ENCODE measurements at regions of chr7 and their contacts with region 1.

Region 1: GRCh38 chr7:322111-322671 is 32.2 kb downstream of the FOXL3 start:
- DNase-seq: peak; percentile 100
- H3K4me3 ChIP-seq: peak overlapping the region in 1 of 2 experiments; percentile 35; a peak in 1 of 4 replicates
- H3K27ac ChIP-seq: no peak overlapping the region
- H3K4me1 ChIP-seq: peaks cover 0 to 22% of the 10 kb centered on the region in 2 experiments; a peak in 1 of 4 replicates
- H3K27me3 ChIP-seq: peaks cover 39% of the 10 kb centered on the region
- CTCF ChIP-seq: peak; percentile 90
- EP300 ChIP-seq: no peak
- RAD21 ChIP-seq: peak; percentile 89

Region 2: DNA sequence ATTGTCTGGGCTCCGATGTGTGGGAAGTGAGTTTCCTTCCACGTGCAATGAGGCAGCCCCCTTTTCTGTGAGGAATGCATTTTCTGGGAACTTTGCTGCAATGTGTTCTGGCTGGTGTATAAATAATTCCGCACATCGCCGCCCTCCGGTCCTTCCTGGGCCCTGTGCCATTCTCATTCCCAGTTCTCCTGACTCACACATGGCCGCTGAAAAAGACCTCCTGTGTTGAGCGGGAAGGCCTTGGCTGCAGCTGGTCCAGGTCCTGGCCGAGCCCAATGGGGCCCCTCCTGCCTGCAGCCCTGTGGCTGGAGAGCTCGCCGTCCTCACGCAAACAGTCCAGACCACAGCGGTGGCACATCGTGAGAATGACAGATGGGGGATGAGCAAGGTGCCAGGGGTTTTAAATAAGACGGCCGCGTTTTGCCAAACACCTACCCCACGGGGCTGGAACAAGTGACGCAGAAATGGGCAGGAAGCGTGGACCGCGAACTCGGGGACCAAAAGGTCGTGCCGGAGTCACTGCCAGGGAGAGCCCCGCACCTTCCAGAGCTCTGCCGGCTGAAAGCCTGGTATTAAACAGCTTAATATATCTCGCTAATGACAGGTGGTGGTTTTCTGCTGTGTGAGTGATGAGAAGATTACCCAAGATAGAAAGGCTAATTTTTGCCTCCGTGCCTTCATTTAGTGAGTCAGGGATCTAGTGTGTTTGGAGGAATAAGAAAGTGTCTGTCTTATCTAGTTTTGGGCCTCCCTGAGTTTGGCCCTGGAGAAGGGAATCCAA is 92.8 kb before region 1 on chr7:
- CTCF ChIA-PET with region 1: no interaction called
- POLR2A ChIA-PET with region 1: no interaction called
- DNase-seq: no peak
- H3K4me3 ChIP-seq: no peak overlapping the region
- H3K27ac ChIP-seq: no peak overlapping the region
- H3K4me1 ChIP-seq: no peaks in the 10 kb centered on the region; a peak in 1 of 4 replicates
- H3K27me3 ChIP-seq: no peaks in the 10 kb centered on the region
- CTCF ChIP-seq: no peak
- EP300 ChIP-seq: no peak
- RAD21 ChIP-seq: no peak

Region 3: GRCh38 chr7:305410-306151 is 16.6 kb before region 1 on chr7:
- CTCF ChIA-PET with region 1: interaction called, 19 read pairs
- POLR2A ChIA-PET with region 1: no interaction called
- DNase-seq: peak; percentile 44
- H3K4me3 ChIP-seq: no peak overlapping the region
- H3K27ac ChIP-seq: no peak overlapping the region
- H3K4me1 ChIP-seq: no peaks in the 10 kb centered on the region
- H3K27me3 ChIP-seq: peaks cover 18% of the 10 kb centered on the region
- CTCF ChIP-seq: no peak
- EP300 ChIP-seq: no peak
- RAD21 ChIP-seq: no peak

Region 4: DNA sequence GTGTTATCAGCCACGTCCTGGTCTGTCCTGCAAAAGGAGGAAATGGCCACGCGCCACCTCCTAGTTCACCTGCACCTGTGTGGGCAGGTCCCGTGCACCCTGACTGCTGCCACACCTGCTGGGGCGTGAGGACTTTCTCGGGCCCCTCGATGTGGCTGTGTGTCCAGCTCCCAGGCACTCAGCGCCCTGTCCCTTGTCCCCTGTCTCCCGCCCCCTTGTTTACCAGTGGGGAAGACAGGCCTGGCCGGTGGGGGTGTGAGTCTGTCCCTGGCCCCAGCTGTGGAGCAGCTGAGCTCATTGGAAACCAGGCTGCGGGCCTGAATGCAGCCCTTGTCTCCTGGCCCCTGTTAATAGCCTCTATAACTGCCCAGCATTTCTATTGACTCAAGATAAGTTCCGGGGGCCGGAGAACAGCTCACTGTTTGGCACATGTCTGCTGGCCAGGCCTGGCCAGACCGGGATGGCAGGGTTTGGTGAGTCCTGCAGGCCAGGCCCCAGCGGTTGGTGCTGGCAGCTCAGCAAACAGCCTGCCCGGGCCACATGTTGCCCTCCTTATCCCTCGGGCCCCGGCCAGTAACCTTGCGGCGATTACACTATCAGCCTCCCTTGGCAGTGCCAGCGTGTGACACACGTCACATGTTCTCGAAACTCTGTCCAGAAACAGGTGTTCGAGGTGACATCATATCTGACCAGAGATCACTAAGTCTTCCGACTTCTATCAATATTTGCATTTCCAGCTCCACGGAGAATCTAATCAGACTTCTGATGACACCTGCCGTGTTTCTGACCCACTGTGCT is 19.8 kb after region 1 on chr7:
- CTCF ChIA-PET with region 1: interaction called, 18 read pairs
- POLR2A ChIA-PET with region 1: no interaction called
- DNase-seq: no peak
- H3K4me3 ChIP-seq: no peak overlapping the region
- H3K27ac ChIP-seq: no peak overlapping the region
- H3K4me1 ChIP-seq: no peaks in the 10 kb centered on the region; a peak in 1 of 4 replicates
- H3K27me3 ChIP-seq: peaks cover 33% of the 10 kb centered on the region; the same call in 1 of the 2 replicates
- CTCF ChIP-seq: no peak
- EP300 ChIP-seq: no peak
- RAD21 ChIP-seq: no peak

Region 5: DNA sequence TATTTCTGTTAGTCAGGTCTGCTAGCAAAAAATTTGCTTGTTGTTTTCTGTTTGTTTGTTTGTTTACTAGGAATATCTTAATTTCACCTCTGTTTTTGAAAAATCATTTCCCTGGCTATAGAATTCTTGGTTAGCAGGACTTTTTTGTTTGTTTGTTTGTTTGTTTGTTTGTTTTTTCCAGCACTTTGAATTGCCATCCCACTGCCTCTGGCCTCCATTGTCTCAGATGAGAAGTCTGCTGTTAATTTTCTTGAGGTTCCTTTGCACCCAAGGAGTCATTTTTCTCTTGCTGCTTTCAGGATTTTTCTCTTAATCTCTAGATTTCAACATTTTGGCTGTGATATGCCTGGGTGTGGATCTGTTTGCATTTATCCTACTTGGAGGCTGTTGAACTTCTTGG is 73.4 kb after region 1 on chr7:
- CTCF ChIA-PET with region 1: no interaction called
- POLR2A ChIA-PET with region 1: no interaction called
- DNase-seq: no peak
- H3K4me3 ChIP-seq: no peak overlapping the region
- H3K27ac ChIP-seq: no peak overlapping the region
- H3K4me1 ChIP-seq: no peaks in the 10 kb centered on the region; a peak in 1 of 4 replicates
- H3K27me3 ChIP-seq: no peaks in the 10 kb centered on the region
- CTCF ChIP-seq: no peak
- EP300 ChIP-seq: no peak
- RAD21 ChIP-seq: no peak

Region 6: DNA sequence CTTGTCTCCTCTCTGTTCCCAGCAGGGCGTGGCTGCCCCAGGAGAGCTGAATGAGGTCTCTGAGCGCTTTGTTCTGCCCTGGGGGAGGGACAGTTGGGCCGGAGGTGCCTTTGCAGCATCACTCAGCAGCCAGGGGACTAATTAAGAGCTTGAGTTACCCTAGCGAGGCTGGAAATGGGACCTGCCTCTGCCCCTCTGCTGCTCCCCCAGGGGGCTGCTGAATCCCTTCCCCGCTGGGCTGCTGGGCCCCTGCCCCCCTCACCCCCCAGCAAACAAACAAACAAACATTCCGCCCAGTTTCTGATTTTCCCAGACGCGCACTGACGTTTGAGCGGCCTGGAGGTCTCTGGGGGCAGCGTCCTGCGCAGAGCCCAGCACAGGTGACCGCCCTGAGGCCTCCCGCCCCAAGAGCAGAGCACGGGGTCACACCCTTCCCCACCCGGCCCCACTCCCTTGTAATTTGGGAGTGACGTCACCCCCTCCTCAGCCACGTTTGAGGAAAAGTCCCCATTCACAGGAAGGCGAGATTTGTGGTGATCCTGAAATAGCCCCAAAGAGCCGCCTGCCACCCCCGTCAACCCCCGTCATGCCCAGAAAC is 129.5 kb after region 1 on chr7:
- CTCF ChIA-PET with region 1: no interaction called
- POLR2A ChIA-PET with region 1: no interaction called
- DNase-seq: no peak
- H3K4me3 ChIP-seq: no peak overlapping the region
- H3K27ac ChIP-seq: no peak overlapping the region
- H3K4me1 ChIP-seq: peaks cover 5 to 8% of the 10 kb centered on the region in 2 experiments; a peak in 2 of 4 replicates
- H3K27me3 ChIP-seq: no peaks in the 10 kb centered on the region
- CTCF ChIP-seq: no peak
- EP300 ChIP-seq: no peak
- RAD21 ChIP-seq: no peak

Region 7: DNA sequence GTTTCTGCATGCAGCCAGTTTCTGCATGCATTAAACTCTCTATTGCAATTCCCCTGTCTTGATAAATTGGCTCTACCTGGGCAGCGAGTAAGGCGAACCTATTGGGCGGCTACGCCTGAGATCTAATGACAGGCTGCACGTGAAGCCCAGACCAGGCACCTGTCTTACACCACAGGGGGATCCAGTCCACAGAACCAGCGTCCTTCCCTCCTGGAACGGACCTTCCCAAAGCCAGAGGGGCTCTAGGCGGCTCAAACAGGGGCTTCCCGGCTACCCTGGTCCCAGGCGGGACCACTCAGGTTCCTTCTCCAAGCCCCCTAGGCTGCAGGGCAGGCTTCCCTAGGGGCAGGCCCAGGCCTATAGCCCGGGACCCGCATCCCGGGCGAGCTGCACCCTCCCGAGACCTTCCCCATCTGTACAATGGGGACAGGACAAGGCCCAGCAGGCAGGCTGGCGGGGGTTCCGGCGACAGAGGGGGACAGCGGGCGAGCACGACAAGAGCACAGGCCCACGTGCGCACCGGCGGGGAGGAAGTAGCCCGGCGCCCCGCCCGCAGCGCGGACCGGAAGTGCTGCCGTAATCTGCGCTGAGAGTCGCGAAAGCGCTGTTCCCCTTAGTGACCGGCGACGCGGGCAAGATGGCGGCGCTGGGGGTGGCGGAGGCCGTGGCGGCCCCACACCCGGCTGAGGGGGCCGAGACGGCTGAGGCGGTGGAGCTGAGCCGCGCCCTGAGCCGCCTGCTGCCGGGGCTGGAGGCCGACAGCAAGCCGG is 404.1 kb after region 1 on chr7 and contains the start of gene DNAAF5:
- CTCF ChIA-PET with region 1: interaction called, 10 read pairs
- POLR2A ChIA-PET with region 1: interaction called, 3 read pairs
- DNase-seq: peak; percentile 98
- H3K4me3 ChIP-seq: peak within 1 kb of the TSS; percentile 73 to 83
- H3K27ac ChIP-seq: peak within 1 kb of the TSS; percentile 50 to 76
- H3K4me1 ChIP-seq: peaks cover 7 to 20% of the 10 kb centered on the region in 2 experiments; a peak in 3 of 4 replicates
- H3K27me3 ChIP-seq: no peaks in the 10 kb centered on the region
- CTCF ChIP-seq: no peak
- EP300 ChIP-seq: peak in 1 of 2 experiments; percentile 19; a peak in 1 of 4 replicates
- RAD21 ChIP-seq: no peak
- polyA plus RNA-seq, gene DNAAF5: 51.8 and 58.5 TPM in 2 replicates

Region 8: GRCh38 chr7:774161-775109 is 452.2 kb after region 1 on chr7:
- CTCF ChIA-PET with region 1: interaction called, 67 read pairs
- POLR2A ChIA-PET with region 1: interaction called, 3 read pairs
- DNase-seq: peak; percentile 93
- H3K4me3 ChIP-seq: no peak overlapping the region
- H3K27ac ChIP-seq: no peak overlapping the region
- H3K4me1 ChIP-seq: peaks cover 40 to 48% of the 10 kb centered on the region in 2 experiments
- H3K27me3 ChIP-seq: no peaks in the 10 kb centered on the region
- CTCF ChIP-seq: peak; percentile 99
- EP300 ChIP-seq: no peak
- RAD21 ChIP-seq: peak; percentile 81

Measured in SK-N-SH (cell line).